ENCODE measurements at regions of chr6 and their contacts with region 1.

Region 1: DNA sequence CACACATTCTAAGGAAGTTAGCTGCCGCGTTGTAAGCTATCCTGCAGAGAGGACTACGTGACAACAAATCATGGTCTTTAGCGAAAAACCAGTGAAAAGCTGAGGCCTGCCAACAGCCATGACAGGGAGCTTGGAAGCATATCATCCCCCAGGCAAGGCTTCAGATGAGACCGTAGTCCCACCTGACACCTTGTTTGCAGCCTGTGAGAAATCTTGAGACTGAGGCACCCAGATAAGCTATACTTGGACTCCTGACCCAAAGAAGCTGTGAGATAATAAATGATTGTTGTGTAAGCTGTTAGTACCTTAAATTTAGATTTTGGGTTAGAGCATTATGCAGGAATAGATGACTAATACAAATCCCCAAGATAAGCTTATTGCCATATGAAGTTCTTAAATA is 45.4 kb upstream of the SENP6 start:
- DNase-seq: no peak
- H3K4me3 ChIP-seq: no peak overlapping the region
- CTCF ChIP-seq: no peak
- POLR2A ChIP-seq: no peak

Region 2: DNA sequence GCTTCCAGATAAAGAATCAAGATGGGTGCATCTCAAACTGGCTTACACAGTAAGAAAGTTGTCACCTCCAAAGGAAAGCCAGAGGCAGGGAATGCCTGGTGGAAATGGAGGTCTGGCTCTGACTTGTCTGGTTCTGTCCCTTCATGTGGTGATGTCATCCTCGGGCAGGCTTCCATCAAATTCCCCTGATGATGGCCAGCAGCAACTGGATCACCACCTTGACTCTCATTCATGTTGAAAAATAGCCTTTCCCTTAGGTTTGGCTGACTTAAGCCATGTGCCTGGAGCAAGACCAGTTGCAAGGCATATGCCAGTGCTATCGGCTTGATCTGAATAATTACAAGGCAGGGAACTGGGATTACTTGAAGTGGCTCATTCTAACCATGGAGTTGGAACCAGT is 487.4 kb after region 1 on chr6:
- intact Hi-C with region 1: no loop called
- DNase-seq: no peak
- H3K4me3 ChIP-seq: no peak overlapping the region
- CTCF ChIP-seq: no peak
- POLR2A ChIP-seq: no peak

Region 3: GRCh38 chr6:77341058-77341986 is 1785.1 kb after region 1 on chr6:
- intact Hi-C with region 1: loop called (anchors 5 kb)
- DNase-seq: no peak
- H3K4me3 ChIP-seq: no peak overlapping the region
- CTCF ChIP-seq: no peak
- POLR2A ChIP-seq: no peak

Measured in lower leg skin (tissue), 4 donors.